ENCODE measurements at regions of chr1 and their contacts with region 1.

Region 1: GRCh38 chr1:33367485-33368405 is 46.8 kb upstream of the A3GALT2 start:
- DNase-seq: peak; percentile 78 to 83 (median 79)
- H3K4me3 ChIP-seq: no peak overlapping the region
- H3K4me3 Mint-ChIP-seq: no peak overlapping the region
- H3K27ac ChIP-seq: no peak overlapping the region
- H3K27ac Mint-ChIP-seq: no peak overlapping the region
- H3K4me1 ChIP-seq: no peaks in the 10 kb centered on the region
- H3K4me1 Mint-ChIP-seq: peaks cover 0 to 5% (median 1%) of the 10 kb centered on the region in 4 donors
- H3K27me3 ChIP-seq: no peaks in the 10 kb centered on the region
- H3K27me3 Mint-ChIP-seq: no peaks in the 10 kb centered on the region

Region 2: GRCh38 chr1:32939655-32940371 is 427.9 kb before region 1 on chr1:
- CTCF ChIA-PET with region 1: no interaction called
- POLR2A ChIA-PET with region 1: no interaction called
- intact Hi-C with region 1: loop called (anchors 10 kb)
- DNase-seq: no peak
- H3K4me3 ChIP-seq: no peak overlapping the region
- H3K4me3 Mint-ChIP-seq: no peak overlapping the region
- H3K27ac ChIP-seq: no peak overlapping the region
- H3K27ac Mint-ChIP-seq: peak overlapping the region in 6 of 7 donors; percentile 48 to 88 (median 71)
- H3K4me1 ChIP-seq: no peaks in the 10 kb centered on the region
- H3K4me1 Mint-ChIP-seq: peaks cover 4 to 17% (median 6%) of the 10 kb centered on the region in 4 donors
- H3K27me3 ChIP-seq: no peaks in the 10 kb centered on the region
- H3K27me3 Mint-ChIP-seq: no peaks in the 10 kb centered on the region

Region 3: DNA sequence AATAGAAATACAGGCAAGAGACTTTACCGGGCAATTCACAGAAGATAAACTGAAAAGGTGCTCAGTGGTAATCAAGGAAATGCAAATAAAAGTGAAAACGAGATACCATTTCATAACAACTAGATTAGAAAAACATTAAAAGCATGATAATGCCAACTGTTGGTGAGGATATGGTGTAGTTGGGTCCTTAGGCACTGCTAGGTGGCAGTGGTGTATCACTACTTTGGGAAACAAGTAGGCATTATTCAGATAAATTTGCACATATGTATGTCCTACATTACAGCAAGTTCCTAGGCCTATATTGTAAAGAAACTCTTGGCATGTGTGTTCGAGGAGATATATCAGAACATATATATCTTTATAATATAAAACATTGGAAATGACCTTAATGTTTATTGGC is 255.8 kb before region 1 on chr1:
- CTCF ChIA-PET with region 1: no interaction called
- POLR2A ChIA-PET with region 1: no interaction called
- intact Hi-C with region 1: loop called (anchors 5 kb)
- DNase-seq: peak in 1 of 5 donors; percentile 10
- H3K4me3 ChIP-seq: no peak overlapping the region
- H3K4me3 Mint-ChIP-seq: no peak overlapping the region
- H3K27ac ChIP-seq: no peak overlapping the region
- H3K27ac Mint-ChIP-seq: no peak overlapping the region
- H3K4me1 ChIP-seq: no peaks in the 10 kb centered on the region
- H3K4me1 Mint-ChIP-seq: no peaks in the 10 kb centered on the region
- H3K27me3 ChIP-seq: no peaks in the 10 kb centered on the region
- H3K27me3 Mint-ChIP-seq: no peaks in the 10 kb centered on the region

Region 4: GRCh38 chr1:33219881-33220661 is 147.7 kb before region 1 on chr1:
- CTCF ChIA-PET with region 1: no interaction called
- POLR2A ChIA-PET with region 1: no interaction called
- intact Hi-C with region 1: loop called (anchors 2 kb)
- DNase-seq: no peak
- H3K4me3 ChIP-seq: no peak overlapping the region
- H3K4me3 Mint-ChIP-seq: no peak overlapping the region
- H3K27ac ChIP-seq: no peak overlapping the region
- H3K27ac Mint-ChIP-seq: no peak overlapping the region
- H3K4me1 ChIP-seq: no peaks in the 10 kb centered on the region
- H3K4me1 Mint-ChIP-seq: peaks cover 0 to 3% (median 0%) of the 10 kb centered on the region in 4 donors
- H3K27me3 ChIP-seq: no peaks in the 10 kb centered on the region
- H3K27me3 Mint-ChIP-seq: peaks cover 0 to 11% of the 10 kb centered on the region in 2 donors

Region 5: DNA sequence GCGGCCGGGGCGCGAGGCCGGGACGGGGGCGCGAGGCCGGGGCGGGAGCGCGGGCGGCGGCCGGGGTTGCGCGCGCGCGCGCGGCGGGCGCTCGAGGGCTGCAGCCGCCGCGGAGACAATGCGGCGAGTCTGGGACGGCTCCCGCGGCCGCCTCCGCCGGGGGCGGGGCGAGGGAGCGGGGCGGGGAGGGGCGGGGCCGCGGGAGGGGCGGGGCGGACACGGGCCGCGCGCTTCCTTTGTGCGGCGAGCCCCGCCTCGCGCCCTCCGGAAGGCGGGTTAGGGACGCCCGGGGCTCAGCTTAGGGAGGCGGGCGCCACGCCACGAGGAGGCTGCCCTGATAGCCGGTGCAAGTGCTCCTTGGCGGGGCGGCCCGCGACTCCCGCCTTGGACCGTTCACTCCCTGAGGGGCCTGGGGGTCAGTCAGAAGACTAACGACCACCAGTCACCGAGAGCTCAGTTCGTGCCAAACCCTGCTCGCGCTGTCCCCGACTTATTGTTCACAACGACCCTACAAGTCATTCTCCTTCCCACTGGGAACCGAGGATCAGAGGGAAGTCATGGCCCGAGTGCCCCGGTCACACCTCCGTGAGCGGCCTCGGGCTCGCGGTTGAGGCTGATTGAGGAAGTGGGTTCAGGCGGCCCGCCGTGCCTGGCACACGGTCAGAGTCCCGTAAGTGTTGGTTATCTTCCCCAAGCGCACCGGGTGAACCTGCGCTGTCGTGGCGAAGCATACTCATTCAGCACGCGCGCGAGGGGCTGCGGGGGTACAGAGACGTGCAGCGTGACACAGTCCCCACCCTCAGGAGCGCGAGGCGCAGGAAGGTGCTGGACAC is 17.8 kb before region 1 on chr1:
- CTCF ChIA-PET with region 1: interaction called, 4 read pairs
- POLR2A ChIA-PET with region 1: no interaction called
- intact Hi-C with region 1: loop called (anchors 2 kb)
- DNase-seq: peak; percentile 73 to 82 (median 78)
- H3K4me3 ChIP-seq: peak overlapping the region; percentile 82 to 84
- H3K4me3 Mint-ChIP-seq: peak overlapping the region; percentile 87 to 93 (median 91)
- H3K27ac ChIP-seq: peak overlapping the region; percentile 65
- H3K27ac Mint-ChIP-seq: peak overlapping the region; percentile 79 to 95 (median 91)
- H3K4me1 ChIP-seq: peaks cover 47% of the 10 kb centered on the region
- H3K4me1 Mint-ChIP-seq: peaks cover 25 to 54% (median 42%) of the 10 kb centered on the region in 4 donors
- H3K27me3 ChIP-seq: no peaks in the 10 kb centered on the region
- H3K27me3 Mint-ChIP-seq: no peaks in the 10 kb centered on the region

Region 6: GRCh38 chr1:34342334-34342733 is 974.6 kb after region 1 on chr1:
- CTCF ChIA-PET with region 1: no interaction called
- POLR2A ChIA-PET with region 1: no interaction called
- intact Hi-C with region 1: no loop called
- DNase-seq: no peak
- H3K4me3 ChIP-seq: no peak overlapping the region
- H3K4me3 Mint-ChIP-seq: no peak overlapping the region
- H3K27ac ChIP-seq: no peak overlapping the region
- H3K27ac Mint-ChIP-seq: no peak overlapping the region
- H3K4me1 ChIP-seq: no peaks in the 10 kb centered on the region
- H3K4me1 Mint-ChIP-seq: no peaks in the 10 kb centered on the region
- H3K27me3 ChIP-seq: no peaks in the 10 kb centered on the region
- H3K27me3 Mint-ChIP-seq: peaks cover 2 to 4% of the 10 kb centered on the region in 2 donors